Activated CD8-positive, alpha-beta T cell treated with anti-CD3 and anti-CD28 coated beads for 36 hours (primary cell): ENCODE measurements at regions of chr1 and their contacts with region 1.

Region 1: GRCh38 chr1:241847796-241848685 is at the start of gene EXO1:
- DNase-seq: peak; percentile 95
- ATAC-seq: peak; percentile 96
- H3K4me3 Mint-ChIP-seq: peak within 1 kb of the TSS; percentile 93
- H3K27ac Mint-ChIP-seq: peak within 1 kb of the TSS; percentile 99
- H3K4me1 Mint-ChIP-seq: peaks cover 18% of the 10 kb centered on the region
- H3K27me3 Mint-ChIP-seq: no peaks in the 10 kb centered on the region
- CTCF ChIP-seq: no peak
- total RNA-seq, gene EXO1: 65.3 to 66.8 TPM

Region 2: GRCh38 chr1:241519308-241520079 is 328.5 kb before region 1 on chr1 and contains the start of gene FH:
- CTCF ChIA-PET with region 1: no interaction called
- POLR2A ChIA-PET with region 1: interaction called, 3 read pairs
- intact Hi-C with region 1: loop called (anchors 5 kb)
- DNase-seq: peak; percentile 97
- ATAC-seq: peak; percentile 98
- H3K4me3 Mint-ChIP-seq: peak within 1 kb of the TSS; percentile 93
- H3K27ac Mint-ChIP-seq: peak within 1 kb of the TSS; percentile 90
- H3K4me1 Mint-ChIP-seq: peaks cover 21% of the 10 kb centered on the region
- H3K27me3 Mint-ChIP-seq: peaks cover 17% of the 10 kb centered on the region
- CTCF ChIP-seq: no peak
- total RNA-seq, gene FH: 95.2 to 95.6 TPM

Region 3: GRCh38 chr1:241627453-241628259 is 220.4 kb before region 1 on chr1:
- CTCF ChIA-PET with region 1: interaction called, 3 read pairs
- POLR2A ChIA-PET with region 1: no interaction called
- intact Hi-C with region 1: loop called (anchors 5 kb)
- DNase-seq: peak; percentile 59
- ATAC-seq: peak; percentile 91
- H3K4me3 Mint-ChIP-seq: peak overlapping the region; percentile 53
- H3K27ac Mint-ChIP-seq: peak overlapping the region; percentile 85
- H3K4me1 Mint-ChIP-seq: peaks cover 31% of the 10 kb centered on the region
- H3K27me3 Mint-ChIP-seq: no peaks in the 10 kb centered on the region
- CTCF ChIP-seq: peak; percentile 73

Region 4: DNA sequence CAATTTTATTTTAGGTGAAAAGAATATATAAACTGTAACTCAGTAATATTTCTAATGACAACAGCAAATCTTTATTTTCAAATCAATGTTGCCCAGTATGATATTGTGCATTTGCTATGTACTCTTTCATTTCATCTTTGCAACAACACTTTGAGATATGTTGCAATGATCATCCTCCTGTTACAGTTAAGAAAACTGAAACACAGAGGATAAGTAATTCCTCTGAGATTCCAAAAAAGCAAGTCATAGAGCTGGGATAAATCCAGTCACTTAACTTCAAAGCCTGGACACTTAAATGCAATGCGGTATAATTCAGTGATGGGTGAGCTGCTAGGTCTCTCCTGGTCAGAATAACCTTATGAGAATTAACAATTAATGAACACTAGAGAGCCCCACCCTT is 48.6 kb before region 1 on chr1:
- CTCF ChIA-PET with region 1: no interaction called
- POLR2A ChIA-PET with region 1: no interaction called
- intact Hi-C with region 1: no loop called
- DNase-seq: no peak
- ATAC-seq: no peak
- H3K4me3 Mint-ChIP-seq: no peak overlapping the region
- H3K27ac Mint-ChIP-seq: no peak overlapping the region
- H3K4me1 Mint-ChIP-seq: no peaks in the 10 kb centered on the region
- H3K27me3 Mint-ChIP-seq: peaks cover 1% of the 10 kb centered on the region
- CTCF ChIP-seq: no peak